ENCODE measurements at regions of chr21 and their contacts with region 1.

Region 1: DNA sequence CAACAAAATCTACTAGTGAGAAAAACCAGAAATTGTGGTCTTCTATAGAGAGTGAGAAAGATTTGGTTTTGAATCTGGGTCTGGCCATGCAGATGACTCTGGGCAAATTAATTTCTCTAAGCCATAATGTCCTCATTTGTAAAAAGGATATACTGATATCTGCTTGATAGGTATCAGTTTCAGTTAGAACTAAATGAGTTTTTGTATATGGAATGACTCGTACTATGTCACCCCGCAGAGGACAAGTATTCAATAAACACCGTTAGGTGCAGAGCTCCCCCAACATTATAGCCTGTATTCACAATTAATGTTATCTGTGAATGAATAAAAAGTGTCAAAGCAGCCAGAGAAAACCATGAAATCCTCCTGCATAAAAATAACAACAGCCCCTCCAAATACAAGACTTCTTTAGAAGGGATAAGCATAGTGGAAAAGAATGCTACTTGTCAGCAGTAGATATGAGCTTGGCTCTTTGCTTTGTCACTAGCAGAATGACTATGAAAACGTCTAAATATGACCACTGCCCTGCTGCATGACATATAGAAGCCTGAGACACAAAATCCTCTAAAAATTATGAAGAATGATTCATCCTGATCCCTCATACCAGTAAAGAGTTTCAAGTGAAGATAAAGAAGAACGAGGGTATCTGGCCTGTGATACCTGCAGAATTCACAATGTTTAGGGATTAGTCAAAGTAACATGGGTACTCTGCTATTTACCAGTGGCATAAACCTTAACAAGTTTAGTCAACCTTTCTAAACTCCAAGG is 17.8 kb downstream of the SCAF4 start:
- DNase-seq: no peak
- H3K4me3 ChIP-seq: no peak overlapping the region
- H3K27ac ChIP-seq: peak overlapping the region; percentile 14
- H3K4me1 ChIP-seq: peaks cover 4% of the 10 kb centered on the region
- H3K27me3 ChIP-seq: no peaks in the 10 kb centered on the region
- CTCF ChIP-seq: no peak

Region 2: GRCh38 chr21:31731802-31732596 is 17.8 kb after region 1 on chr21 and contains the start of gene SCAF4:
- CTCF ChIA-PET with region 1: no interaction called
- dilution Hi-C with region 1: no loop called
- in situ Hi-C with region 1: no loop called
- intact Hi-C with region 1: loop called (anchors 2 kb)
- DNase-seq: peak; percentile 87
- H3K4me3 ChIP-seq: peak within 1 kb of the TSS; percentile 81 to 94 (median 84)
- H3K27ac ChIP-seq: peak within 1 kb of the TSS; percentile 76
- H3K4me1 ChIP-seq: peaks cover 27% of the 10 kb centered on the region
- H3K27me3 ChIP-seq: no peaks in the 10 kb centered on the region
- CTCF ChIP-seq: no peak
- total RNA-seq, gene SCAF4: 9.5 to 34.8 TPM

Region 3: GRCh38 chr21:32782698-32783097 is 1068.5 kb after region 1 on chr21:
- CTCF ChIA-PET with region 1: no interaction called
- dilution Hi-C with region 1: no loop called
- in situ Hi-C with region 1: no loop called
- intact Hi-C with region 1: no loop called
- DNase-seq: no peak
- H3K4me3 ChIP-seq: no peak overlapping the region
- H3K27ac ChIP-seq: no peak overlapping the region
- H3K4me1 ChIP-seq: no peaks in the 10 kb centered on the region
- H3K27me3 ChIP-seq: no peaks in the 10 kb centered on the region
- CTCF ChIP-seq: no peak